Activated naive CD4-positive, alpha-beta T cell treated with anti-CD3 and anti-CD28 coated beads for 36 hours (primary cell): ENCODE measurements at regions of chr9 and their contacts with region 1.

Region 1: GRCh38 chr9:98074115-98074990 is 17.8 kb downstream of the NANS start:
- DNase-seq: peak; percentile 81
- H3K4me3 Mint-ChIP-seq: peak overlapping the region; percentile 51
- H3K27ac Mint-ChIP-seq: peak overlapping the region; percentile 94
- H3K4me1 Mint-ChIP-seq: peaks cover 34% of the 10 kb centered on the region
- H3K27me3 Mint-ChIP-seq: no peaks in the 10 kb centered on the region

Region 2: DNA sequence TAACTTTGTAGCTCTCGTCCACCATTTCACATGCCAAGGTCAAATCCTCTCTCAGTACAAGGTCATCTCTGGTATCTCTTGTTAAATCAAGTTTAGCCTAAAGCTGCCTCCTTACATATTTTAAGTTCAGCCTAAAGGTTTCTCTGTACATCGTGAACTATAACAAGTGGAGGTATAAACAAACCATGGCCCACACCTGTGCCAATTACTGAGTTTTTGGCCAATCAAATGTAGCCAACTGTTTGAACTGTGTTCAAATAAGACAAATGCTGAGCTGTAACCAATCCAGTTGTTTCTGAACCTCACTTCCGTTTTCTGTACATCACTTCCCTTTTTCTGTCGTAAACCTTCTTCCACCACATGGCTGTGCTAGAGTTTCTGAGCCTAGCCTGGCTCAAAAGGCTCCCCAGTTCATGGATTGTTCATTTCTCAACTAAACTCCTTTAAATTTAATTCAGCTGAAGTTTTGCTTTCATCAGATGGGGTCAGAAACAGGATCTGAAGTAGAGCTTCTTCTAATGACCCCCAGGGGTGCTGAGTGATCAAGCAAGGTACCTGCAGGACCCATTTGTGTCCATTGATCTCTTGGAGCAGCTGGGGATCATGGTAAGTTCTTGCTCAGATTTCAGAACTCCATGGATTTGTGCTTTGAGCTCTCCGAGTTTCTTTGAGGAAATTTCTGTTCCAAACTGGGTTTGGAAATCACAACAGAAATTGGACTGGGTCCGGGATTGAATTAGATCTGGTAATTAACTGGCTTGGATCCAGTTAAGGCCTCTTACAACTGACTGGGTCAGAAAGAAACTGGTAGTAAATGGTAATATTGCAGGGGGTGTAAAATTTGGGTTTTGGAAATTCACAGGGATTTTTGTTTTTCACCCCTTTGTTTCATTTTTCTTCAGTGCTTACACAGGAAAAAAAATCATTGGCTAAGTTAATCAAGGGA is 28.8 kb before region 1 on chr9:
- CTCF ChIA-PET with region 1: interaction called, 3 read pairs
- intact Hi-C with region 1: loop called (anchors 1 kb)
- DNase-seq: peak; percentile 58
- H3K4me3 Mint-ChIP-seq: peak overlapping the region; percentile 84
- H3K27ac Mint-ChIP-seq: peak overlapping the region; percentile 90
- H3K4me1 Mint-ChIP-seq: peaks cover 42% of the 10 kb centered on the region
- H3K27me3 Mint-ChIP-seq: no peaks in the 10 kb centered on the region

Region 3: GRCh38 chr9:98101868-98102273 is 27.5 kb after region 1 on chr9:
- CTCF ChIA-PET with region 1: interaction called, 13 read pairs
- intact Hi-C with region 1: loop called (anchors 1 kb)
- DNase-seq: peak; percentile 90
- H3K4me3 Mint-ChIP-seq: peak overlapping the region; percentile 65
- H3K27ac Mint-ChIP-seq: peak overlapping the region; percentile 96
- H3K4me1 Mint-ChIP-seq: peaks cover 83% of the 10 kb centered on the region
- H3K27me3 Mint-ChIP-seq: no peaks in the 10 kb centered on the region

Region 4: DNA sequence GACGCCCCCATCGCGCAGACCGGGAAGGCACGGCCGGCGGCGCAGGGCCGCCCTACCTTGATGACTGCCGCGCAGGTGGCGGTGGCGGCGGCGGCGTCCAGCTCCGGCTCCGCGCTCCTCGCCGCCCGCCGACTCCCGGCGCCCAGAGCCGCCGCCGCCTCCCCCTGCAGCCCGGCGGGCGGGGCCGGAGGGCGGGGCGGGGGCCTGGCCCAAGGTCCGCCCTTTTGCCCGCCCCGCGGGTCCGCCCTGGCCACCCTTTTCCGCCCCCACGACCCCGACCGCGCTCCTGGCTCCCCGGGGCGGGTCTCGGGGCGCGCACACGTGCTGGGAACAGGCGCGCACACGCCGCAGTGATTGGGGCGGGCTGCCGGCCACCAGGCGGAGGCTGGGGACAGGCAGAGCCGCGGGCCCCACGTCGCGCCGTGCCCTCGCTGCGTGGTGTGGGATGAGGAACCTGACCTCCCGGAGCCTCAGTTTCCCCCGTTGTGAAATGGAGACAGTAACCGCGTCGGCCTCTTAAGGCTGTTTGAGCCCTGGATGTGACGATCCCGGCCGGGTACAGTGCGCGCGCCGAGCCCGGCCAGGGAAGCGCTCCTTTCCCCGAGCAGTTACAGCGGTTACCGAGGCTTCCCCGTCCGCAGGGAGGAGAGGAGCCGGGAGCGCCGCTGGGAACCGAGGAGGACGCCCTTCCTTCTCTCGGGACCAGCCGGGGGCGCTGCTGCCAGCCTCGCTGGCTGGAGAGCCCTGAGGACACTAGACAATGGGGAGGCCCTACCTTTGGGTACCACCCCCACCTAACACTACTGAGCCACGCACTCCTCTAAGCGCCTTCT is 118.4 kb after region 1 on chr9 and contains the start of gene CORO2A:
- CTCF ChIA-PET with region 1: interaction called, 8 read pairs
- intact Hi-C with region 1: loop called (anchors 1 kb)
- DNase-seq: peak; percentile 64
- H3K4me3 Mint-ChIP-seq: peak within 1 kb of the TSS; percentile 82
- H3K27ac Mint-ChIP-seq: peak within 1 kb of the TSS; percentile 56
- H3K4me1 Mint-ChIP-seq: peaks cover 27% of the 10 kb centered on the region
- H3K27me3 Mint-ChIP-seq: no peaks in the 10 kb centered on the region
- total RNA-seq, gene CORO2A: 8.1 to 8.2 TPM

Region 5: DNA sequence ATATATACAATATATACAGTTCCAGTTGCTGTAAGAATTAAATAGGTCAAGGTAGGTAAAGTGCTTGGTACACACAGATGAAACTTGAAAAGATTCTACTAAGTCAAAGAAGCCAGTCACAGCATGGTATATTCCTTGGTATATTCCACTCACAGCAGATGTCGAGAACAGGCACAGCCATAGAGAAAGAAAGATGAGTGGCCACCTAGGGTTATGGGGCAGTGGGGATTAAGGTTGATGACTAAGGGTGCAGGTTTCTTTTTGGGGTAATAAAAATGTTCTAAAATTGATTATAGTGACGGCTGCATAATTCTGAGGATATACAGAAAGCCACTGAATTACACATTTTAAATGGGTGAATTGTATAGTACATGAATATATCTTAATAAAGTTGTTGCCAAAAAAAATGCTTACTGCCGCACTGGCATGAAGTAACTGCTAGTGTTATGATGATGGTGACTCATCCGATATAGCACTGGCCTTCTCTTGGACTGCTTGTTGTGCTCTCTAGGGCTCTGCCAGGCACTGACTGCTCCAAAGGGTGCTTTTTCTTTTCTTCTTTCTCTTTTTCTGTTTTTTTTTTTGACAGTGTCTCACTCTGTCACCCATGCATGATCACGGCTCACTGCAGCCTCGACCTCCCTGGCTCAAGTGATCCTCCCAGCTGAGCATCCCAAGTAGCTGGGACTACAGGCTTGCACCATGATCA is 157.6 kb after region 1 on chr9:
- CTCF ChIA-PET with region 1: no interaction called
- intact Hi-C with region 1: no loop called
- DNase-seq: no peak
- H3K4me3 Mint-ChIP-seq: no peak overlapping the region
- H3K27ac Mint-ChIP-seq: no peak overlapping the region
- H3K4me1 Mint-ChIP-seq: no peaks in the 10 kb centered on the region
- H3K27me3 Mint-ChIP-seq: no peaks in the 10 kb centered on the region

Region 6: DNA sequence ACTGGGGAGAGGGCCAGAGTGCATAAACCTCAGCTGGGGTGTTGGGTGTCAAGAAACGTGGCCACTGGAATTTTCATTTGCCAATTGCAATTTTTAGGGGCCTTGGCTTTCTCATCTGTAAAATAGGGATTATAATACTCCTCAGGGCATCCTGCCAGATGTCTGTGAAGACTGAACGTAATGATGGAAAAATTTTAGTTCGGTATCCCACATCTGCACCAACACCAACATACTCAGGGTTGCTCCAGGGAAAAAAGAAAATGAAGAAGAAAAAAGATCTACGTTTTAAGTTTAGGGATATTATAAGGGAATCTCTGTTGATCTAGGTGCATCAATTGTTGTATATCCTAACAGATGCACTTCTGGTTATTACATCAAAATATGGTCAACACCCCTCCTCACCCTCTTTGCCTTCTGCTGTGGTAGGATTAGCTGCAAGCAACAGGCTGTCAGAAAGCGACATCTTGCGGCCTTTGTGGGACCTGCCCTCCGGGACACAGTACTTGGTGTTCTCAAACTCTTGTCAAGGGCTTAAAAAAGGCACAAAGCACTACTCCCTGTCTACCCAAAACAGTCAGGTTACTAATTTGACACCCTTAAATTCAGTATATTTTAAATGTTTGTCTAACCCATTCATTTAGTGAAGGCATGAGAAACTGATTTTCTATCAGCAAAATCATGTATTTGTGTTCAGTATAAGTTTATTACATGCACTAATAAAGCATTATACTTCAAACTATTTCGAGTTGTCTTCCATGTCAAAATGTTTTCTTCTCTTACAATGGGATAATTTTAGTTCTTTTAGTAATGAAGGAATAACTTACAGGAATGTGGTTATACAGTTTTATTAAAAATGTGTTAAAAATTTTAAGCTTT is 189.4 kb after region 1 on chr9:
- CTCF ChIA-PET with region 1: interaction called, 12 read pairs
- intact Hi-C with region 1: loop called (anchors 1 kb)
- DNase-seq: peak; percentile 93
- H3K4me3 Mint-ChIP-seq: no peak overlapping the region
- H3K27ac Mint-ChIP-seq: no peak overlapping the region
- H3K4me1 Mint-ChIP-seq: no peaks in the 10 kb centered on the region
- H3K27me3 Mint-ChIP-seq: no peaks in the 10 kb centered on the region

Region 7: DNA sequence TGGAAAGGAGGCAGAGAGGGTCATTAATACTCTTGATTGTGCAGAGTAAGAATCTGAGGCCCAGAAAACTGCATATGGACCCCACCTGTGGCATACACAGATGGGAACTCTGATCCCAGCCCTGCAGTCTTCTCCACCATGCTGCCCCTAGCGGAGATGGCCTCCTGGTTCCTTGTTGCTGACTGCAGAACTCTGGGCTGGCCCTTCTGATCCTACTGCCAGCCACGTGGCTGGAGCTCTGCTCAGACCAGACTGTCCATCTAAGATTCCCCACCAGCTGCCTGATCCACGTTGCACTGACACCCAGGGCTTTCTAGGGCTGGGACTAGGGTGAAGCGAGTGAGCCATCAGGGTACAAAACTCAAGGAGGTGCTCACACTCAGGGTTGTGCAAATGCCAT is 1501.6 kb after region 1 on chr9:
- CTCF ChIA-PET with region 1: no interaction called
- intact Hi-C with region 1: no loop called
- DNase-seq: no peak
- H3K4me3 Mint-ChIP-seq: no peak overlapping the region
- H3K27ac Mint-ChIP-seq: no peak overlapping the region
- H3K4me1 Mint-ChIP-seq: no peaks in the 10 kb centered on the region
- H3K27me3 Mint-ChIP-seq: no peaks in the 10 kb centered on the region